Posterior vena cava (tissue), 2 donors: ENCODE measurements at regions of chr3 and their contacts with region 1.

Region 1: GRCh38 chr3:151526757-151527156 is 65.9 kb upstream of the IGSF10 start:
- DNase-seq: no peak

Region 2: GRCh38 chr3:151425627-151426335 is 101.0 kb before region 1 on chr3:
- intact Hi-C with region 1: no loop called
- DNase-seq: no peak

Region 3: DNA sequence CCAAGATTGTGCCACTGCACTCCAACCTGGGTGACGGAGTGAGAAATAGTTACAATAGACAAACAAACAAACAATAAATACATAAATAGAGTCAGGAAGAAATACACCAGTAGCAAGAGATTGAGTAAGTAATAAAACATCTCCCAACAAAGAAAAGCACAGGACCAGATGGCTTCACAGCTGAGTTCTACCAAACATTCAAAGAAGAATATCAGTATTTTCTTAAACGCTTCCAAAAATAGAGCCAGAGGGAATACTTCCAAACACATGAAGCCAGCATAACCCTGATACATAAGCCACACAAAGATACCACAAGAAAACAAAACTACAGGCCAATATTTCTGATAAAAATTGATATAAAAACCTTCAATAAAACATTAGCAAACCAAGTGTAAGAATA is 35.2 kb before region 1 on chr3:
- intact Hi-C with region 1: loop called in 1 of 2 experiments (anchors 2 kb)
- DNase-seq: no peak